ENCODE measurements at regions of chr3 and their contacts with region 1.

Region 1: GRCh38 chr3:183555541-183556081 is at the start of gene KLHL6:
- DNase-seq: peak; percentile 91
- H3K4me3 Mint-ChIP-seq: peak within 1 kb of the TSS; percentile 99
- H3K27ac Mint-ChIP-seq: peak within 1 kb of the TSS; percentile 100
- H3K4me1 Mint-ChIP-seq: peaks cover 40% of the 10 kb centered on the region
- H3K27me3 Mint-ChIP-seq: no peaks in the 10 kb centered on the region
- total RNA-seq, gene KLHL6: 82.3 to 82.4 TPM

Region 2: GRCh38 chr3:183265834-183266417 is 289.7 kb before region 1 on chr3:
- CTCF ChIA-PET with region 1: no interaction called
- intact Hi-C with region 1: loop called (anchors 5 kb)
- DNase-seq: peak; percentile 80
- H3K4me3 Mint-ChIP-seq: no peak overlapping the region
- H3K27ac Mint-ChIP-seq: no peak overlapping the region
- H3K4me1 Mint-ChIP-seq: peaks cover 6% of the 10 kb centered on the region
- H3K27me3 Mint-ChIP-seq: no peaks in the 10 kb centered on the region

Region 3: GRCh38 chr3:183468424-183468823 is 87.2 kb before region 1 on chr3:
- CTCF ChIA-PET with region 1: interaction called, 5 read pairs
- intact Hi-C with region 1: loop called (anchors 1 kb)
- DNase-seq: no peak
- H3K4me3 Mint-ChIP-seq: no peak overlapping the region
- H3K27ac Mint-ChIP-seq: peak overlapping the region; percentile 87
- H3K4me1 Mint-ChIP-seq: peaks cover 27% of the 10 kb centered on the region
- H3K27me3 Mint-ChIP-seq: no peaks in the 10 kb centered on the region

Region 4: GRCh38 chr3:183527428-183528379 is 27.9 kb before region 1 on chr3:
- CTCF ChIA-PET with region 1: interaction called, 4 read pairs
- intact Hi-C with region 1: loop called (anchors 1 kb)
- DNase-seq: peak; percentile 34
- H3K4me3 Mint-ChIP-seq: peak overlapping the region; percentile 16
- H3K27ac Mint-ChIP-seq: peak overlapping the region; percentile 85
- H3K4me1 Mint-ChIP-seq: peaks cover 56% of the 10 kb centered on the region
- H3K27me3 Mint-ChIP-seq: no peaks in the 10 kb centered on the region

Region 5: DNA sequence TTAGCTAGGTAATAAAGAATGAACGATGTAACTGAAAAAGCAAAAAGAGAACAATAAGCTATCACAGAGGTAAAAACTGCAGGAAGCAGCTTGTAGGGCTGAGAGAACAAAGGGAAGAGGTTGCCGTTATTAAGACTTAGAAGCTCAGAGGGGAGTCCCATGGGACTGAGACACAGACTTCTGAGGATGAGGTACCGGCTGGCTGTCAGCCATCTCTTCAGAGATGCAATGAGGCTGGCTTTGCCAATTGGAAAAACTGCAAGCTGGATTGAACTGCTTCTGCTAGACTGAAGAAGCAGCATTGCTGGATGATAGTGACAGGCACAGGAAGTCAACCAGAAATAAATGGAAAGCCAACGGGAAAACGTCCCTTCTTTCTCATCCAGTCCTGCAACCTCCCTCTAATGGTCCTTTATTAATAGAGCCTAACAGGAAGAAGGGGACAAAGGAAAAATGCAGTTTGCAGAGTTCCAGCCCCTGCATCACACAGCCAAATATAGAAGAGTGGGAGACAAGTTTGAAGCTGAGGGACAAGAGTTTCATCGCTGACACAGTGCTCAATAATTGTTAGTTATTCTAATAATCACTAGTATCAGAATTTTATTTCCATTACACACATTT is 21.0 kb after region 1 on chr3:
- CTCF ChIA-PET with region 1: no interaction called
- intact Hi-C with region 1: no loop called
- DNase-seq: no peak
- H3K4me3 Mint-ChIP-seq: no peak overlapping the region
- H3K27ac Mint-ChIP-seq: no peak overlapping the region
- H3K4me1 Mint-ChIP-seq: peaks cover 21% of the 10 kb centered on the region
- H3K27me3 Mint-ChIP-seq: no peaks in the 10 kb centered on the region

Region 6: DNA sequence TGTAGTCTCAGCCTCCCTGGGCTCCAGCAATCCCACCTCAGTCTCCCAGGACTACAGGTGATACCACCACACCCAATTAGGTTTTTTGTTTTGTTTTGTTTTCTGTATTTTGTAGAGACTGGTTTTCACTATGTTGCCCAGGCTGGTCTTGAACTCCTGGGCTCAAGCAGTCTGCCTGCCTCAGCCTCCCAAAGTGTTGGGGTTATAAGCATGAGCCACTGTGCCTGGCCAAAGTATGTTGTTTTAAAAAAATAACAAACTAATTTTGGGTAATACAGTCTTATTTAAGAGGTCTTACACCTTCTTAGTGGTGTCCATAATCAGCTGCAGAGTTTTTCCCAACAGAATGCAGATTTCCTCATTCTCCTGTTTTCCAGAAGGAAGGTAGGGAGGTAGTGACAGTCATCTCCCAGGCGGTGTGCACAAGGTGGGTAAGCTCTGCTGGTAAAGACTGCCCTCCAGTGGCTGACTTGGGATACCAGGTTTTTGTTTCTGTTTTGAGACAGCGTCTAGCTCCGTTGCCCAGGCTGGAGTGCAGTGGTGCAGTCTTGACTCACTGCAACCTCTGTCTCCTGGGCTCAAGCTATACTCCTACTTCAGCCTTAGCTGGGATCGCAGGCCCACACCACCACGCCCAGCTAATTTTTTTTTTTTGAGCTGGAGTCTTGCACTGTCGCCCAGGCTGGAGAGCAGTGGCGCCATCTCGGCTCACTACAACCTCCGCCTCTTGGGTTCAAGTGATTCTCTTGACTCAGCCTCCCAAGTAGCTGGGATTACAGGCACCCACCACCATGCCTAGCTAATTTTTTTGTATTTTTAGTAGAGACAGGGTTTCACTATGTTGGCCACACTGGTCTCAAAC is 211.4 kb after region 1 on chr3:
- CTCF ChIA-PET with region 1: interaction called, 3 read pairs
- intact Hi-C with region 1: loop called (anchors 1 kb)
- DNase-seq: peak; percentile 89
- H3K4me3 Mint-ChIP-seq: no peak overlapping the region
- H3K27ac Mint-ChIP-seq: no peak overlapping the region
- H3K4me1 Mint-ChIP-seq: peaks cover 11% of the 10 kb centered on the region
- H3K27me3 Mint-ChIP-seq: no peaks in the 10 kb centered on the region

Measured in activated naive CD4-positive, alpha-beta T cell treated with anti-CD3 and anti-CD28 coated beads for 36 hours (primary cell).